ENCODE measurements at regions of chr2 and their contacts with region 1.

Region 1: GRCh38 chr2:241702132-241703031 is 543 bp downstream of the ING5 start:
- DNase-seq: peak; percentile 86 to 89
- H3K4me3 ChIP-seq: peak overlapping the region; percentile 96
- H3K4me3 Mint-ChIP-seq: peak overlapping the region; percentile 79
- H3K27ac Mint-ChIP-seq: peak overlapping the region; percentile 63
- H3K4me1 ChIP-seq: no peaks in the 10 kb centered on the region
- H3K4me1 Mint-ChIP-seq: no peaks in the 10 kb centered on the region
- H3K27me3 ChIP-seq: no peaks in the 10 kb centered on the region
- H3K27me3 Mint-ChIP-seq: no peaks in the 10 kb centered on the region
- CTCF ChIP-seq: peak; percentile 25 to 65

Region 2: DNA sequence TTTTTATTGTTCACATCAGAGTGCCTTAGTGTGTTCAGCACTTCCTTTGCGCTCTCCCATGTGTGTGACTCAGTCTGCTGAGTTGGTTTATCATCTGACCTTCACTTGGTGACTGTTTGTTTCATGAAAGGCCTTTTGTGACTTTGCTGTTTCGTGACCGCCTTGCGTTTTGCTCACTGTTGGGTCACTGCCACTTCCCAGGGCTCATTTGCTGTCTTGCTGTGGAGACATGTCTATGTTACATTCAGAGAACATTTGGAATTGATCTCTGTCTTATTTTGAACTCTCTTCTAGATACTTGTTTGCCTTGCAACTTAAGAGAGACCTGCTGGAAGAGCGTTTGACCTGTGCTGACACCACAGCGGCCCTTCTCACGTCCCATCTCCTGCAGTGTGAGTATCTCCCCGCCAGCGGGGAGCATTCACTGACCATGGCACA is 291.6 kb before region 1 on chr2:
- CTCF ChIA-PET with region 1: no interaction called
- POLR2A ChIA-PET with region 1: no interaction called
- intact Hi-C with region 1: no loop called
- DNase-seq: no peak
- H3K4me3 ChIP-seq: no peak overlapping the region
- H3K4me3 Mint-ChIP-seq: no peak overlapping the region
- H3K27ac Mint-ChIP-seq: no peak overlapping the region
- H3K4me1 ChIP-seq: no peaks in the 10 kb centered on the region
- H3K4me1 Mint-ChIP-seq: no peaks in the 10 kb centered on the region
- H3K27me3 ChIP-seq: no peaks in the 10 kb centered on the region
- H3K27me3 Mint-ChIP-seq: no peaks in the 10 kb centered on the region
- CTCF ChIP-seq: no peak

Region 3: DNA sequence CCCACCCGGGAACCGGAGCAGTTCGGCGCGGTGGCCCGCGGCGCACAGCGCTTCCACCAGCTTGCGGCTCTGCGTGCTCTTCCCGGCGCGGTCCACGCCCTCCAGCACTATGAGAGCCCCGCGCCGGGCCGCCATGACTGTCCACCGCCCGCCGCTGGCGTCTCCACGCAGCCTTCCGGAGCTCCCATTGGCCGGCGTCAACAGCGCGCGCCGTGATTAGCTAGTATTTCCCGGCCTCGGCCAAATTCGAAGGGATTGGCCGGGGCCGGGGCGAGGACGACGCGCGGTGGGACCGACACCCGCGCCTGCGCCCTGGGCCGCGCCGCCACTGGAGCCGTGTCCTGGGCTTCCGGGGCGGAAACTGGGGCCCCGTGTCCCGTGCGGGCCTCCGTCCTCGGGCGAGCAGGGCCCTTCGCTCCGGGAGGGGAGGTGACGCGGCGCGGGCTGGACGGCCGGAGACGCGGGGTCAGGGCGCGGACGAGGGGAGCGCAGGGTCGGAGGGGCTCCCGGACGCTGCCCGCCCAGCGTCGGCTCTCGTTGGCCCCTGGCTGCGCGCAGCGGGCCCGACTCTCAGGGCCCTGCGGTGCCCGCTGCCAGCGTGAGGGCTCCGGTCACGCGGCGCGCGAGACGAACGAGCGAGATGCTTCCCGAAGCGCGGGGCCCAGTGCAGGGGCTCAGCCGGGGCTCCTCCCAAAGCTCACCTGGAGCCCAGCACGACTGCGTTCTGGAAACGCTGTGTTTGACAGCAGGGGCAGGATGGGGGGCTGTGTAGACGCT is 15.5 kb before region 1 on chr2 and contains the start of gene DTYMK:
- CTCF ChIA-PET with region 1: interaction called, 7 read pairs
- POLR2A ChIA-PET with region 1: interaction called, 44 read pairs
- intact Hi-C with region 1: loop called (anchors 2 kb)
- DNase-seq: peak; percentile 91 to 94
- H3K4me3 ChIP-seq: peak within 1 kb of the TSS; percentile 80
- H3K4me3 Mint-ChIP-seq: peak within 1 kb of the TSS; percentile 91
- H3K27ac Mint-ChIP-seq: peak within 1 kb of the TSS; percentile 88
- H3K4me1 ChIP-seq: peaks cover 4% of the 10 kb centered on the region; the same call in 1 of the 2 replicates
- H3K4me1 Mint-ChIP-seq: no peaks in the 10 kb centered on the region
- H3K27me3 ChIP-seq: no peaks in the 10 kb centered on the region
- H3K27me3 Mint-ChIP-seq: no peaks in the 10 kb centered on the region
- CTCF ChIP-seq: no peak
- total RNA-seq, gene DTYMK: 65.1 and 68.4 TPM in 2 replicates

Region 4: GRCh38 chr2:241734467-241735208 is 32.3 kb after region 1 on chr2 and contains the start of gene D2HGDH:
- CTCF ChIA-PET with region 1: no interaction called
- POLR2A ChIA-PET with region 1: interaction called, 4 read pairs
- intact Hi-C with region 1: loop called (anchors 1 kb)
- DNase-seq: peak; percentile 86 to 91
- H3K4me3 ChIP-seq: peak within 1 kb of the TSS; percentile 87
- H3K4me3 Mint-ChIP-seq: peak within 1 kb of the TSS; percentile 69
- H3K27ac Mint-ChIP-seq: no peak within 1 kb of the TSS
- H3K4me1 ChIP-seq: peaks cover 9% of the 10 kb centered on the region; the same call in 1 of the 2 replicates
- H3K4me1 Mint-ChIP-seq: no peaks in the 10 kb centered on the region
- H3K27me3 ChIP-seq: no peaks in the 10 kb centered on the region
- H3K27me3 Mint-ChIP-seq: no peaks in the 10 kb centered on the region
- CTCF ChIP-seq: no peak
- total RNA-seq, gene D2HGDH: 35.4 and 41.3 TPM in 2 replicates

Region 5: DNA sequence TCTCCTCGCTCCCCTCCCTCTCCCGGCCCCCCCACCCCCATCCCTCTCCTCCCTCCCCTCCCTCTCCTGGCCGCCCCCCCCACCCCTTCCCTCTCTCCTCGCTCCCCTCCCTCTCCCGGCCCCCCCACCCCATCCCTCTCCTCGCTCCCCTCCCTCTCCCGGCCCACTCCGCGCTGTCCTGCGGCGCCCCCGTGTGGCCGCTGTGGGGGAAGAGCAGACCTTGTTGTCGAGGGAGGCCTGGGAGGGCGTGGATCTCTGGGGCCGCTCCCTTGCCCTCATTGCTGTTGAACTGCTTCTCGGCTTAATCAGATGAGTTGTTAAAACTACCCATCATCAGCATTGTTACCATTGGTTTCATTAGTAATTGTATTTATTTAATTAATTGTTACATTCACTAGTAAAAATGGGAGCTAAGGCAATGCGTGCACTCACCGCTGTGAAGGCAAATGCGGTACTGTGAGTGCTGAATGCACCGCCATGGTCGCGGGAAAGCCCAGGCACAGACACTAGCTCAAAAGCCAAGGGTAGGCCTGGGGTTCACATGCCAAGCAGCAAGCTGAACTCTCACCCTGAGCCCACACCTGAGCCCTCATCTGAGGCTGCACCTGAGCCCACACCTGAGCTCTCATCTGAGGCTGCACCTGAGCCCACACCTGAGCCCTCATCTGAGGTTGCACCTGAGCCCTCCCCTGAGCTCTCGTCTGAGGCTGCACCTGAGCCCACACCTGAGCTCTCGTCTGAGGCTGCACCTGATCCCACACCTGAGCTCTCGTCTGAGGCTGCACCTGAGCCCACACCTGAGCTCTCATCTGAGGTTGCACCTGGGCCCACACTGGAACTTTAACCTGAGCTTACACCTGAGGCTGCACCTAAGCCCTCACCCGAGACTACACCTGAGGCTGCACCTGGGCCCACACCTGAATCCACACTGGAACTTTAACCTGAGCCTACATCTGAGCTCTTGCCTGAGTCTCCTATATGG is 175.9 kb after region 1 on chr2:
- CTCF ChIA-PET with region 1: no interaction called
- POLR2A ChIA-PET with region 1: no interaction called
- intact Hi-C with region 1: loop called (anchors 1 kb)
- DNase-seq: peak; percentile 55 to 73
- H3K4me3 ChIP-seq: no peak overlapping the region
- H3K4me3 Mint-ChIP-seq: no peak overlapping the region
- H3K27ac Mint-ChIP-seq: no peak overlapping the region
- H3K4me1 ChIP-seq: peaks cover 4% of the 10 kb centered on the region; the same call in 1 of the 2 replicates
- H3K4me1 Mint-ChIP-seq: no peaks in the 10 kb centered on the region
- H3K27me3 ChIP-seq: no peaks in the 10 kb centered on the region
- H3K27me3 Mint-ChIP-seq: no peaks in the 10 kb centered on the region
- CTCF ChIP-seq: peak; percentile 43 to 80

Measured in Caco-2 (cell line).